BJ (cell line): ENCODE measurements at regions of chr1 and their contacts with region 1.

Region 1: DNA sequence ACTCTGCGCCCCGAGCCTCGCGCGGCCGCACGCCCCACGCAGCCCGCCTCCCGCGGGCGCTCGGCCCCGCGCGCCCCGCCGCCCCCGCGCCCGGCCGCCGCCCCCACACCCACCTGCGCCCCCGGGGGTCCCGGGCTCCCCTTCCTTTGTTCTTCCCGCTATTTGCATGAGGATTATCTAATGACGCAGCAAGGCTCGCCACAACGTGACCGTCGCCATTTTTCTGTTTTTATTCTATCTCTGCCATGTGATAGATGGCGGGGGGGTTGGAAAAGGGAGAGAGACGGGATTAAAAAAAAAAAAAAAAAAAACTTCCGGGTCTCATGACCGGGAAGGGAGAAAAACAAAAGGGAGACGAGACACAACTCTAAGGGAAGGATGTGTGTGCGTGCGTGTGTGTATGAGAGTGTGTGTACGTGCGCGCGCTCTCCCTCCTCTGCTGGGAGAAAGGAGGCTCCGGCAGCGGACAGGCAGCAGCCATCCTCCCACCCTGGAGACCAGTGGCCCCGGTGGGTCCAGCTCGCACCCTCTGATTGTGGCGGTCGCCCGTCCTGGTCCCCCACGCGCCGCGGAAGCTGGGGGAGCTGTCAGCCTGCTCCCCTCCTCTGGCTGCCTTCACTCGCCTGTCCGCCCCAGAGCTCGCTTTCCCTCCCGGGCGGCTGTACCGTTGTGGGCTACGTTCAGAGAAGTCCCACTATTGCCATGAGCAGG is 80.4 kb upstream of the AK4 start:
- DNase-seq: no peak
- H3K4me3 ChIP-seq: peak overlapping the region; percentile 84
- H3K27me3 ChIP-seq: peaks cover 1% of the 10 kb centered on the region; the same call in 1 of the 2 replicates
- CTCF ChIP-seq: no peak

Region 2: DNA sequence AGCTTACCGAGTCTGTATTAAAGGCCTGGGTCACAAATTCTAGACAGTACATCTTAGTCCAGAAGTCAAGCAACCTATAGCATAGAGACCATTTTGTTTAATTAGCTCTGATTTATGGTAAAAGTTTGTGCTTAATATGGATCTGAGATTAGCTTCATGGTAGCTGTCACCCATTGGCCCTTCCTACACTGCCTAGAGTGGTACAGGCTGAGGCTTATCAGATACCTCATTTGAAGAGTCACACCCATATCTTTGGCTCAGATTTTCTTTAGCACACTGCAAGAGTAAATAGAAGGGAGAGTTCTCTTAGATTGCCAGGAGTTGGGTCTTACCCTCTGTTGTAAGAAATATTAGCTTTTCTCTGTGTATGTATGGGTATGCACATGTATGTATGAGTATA is 84.0 kb after region 1 on chr1:
- CTCF ChIA-PET with region 1: no interaction called
- POLR2A ChIA-PET with region 1: interaction called, 18 read pairs
- DNase-seq: no peak
- H3K4me3 ChIP-seq: no peak overlapping the region
- H3K27me3 ChIP-seq: peaks cover 3% of the 10 kb centered on the region
- CTCF ChIP-seq: no peak